Gastrocnemius medialis (tissue), 4 donors: ENCODE measurements at regions of chr18 and their contacts with region 1.

Region 1: GRCh38 chr18:73283788-73284187 is 416.0 kb upstream of the NETO1 start:
- DNase-seq: no peak
- ATAC-seq: no peak
- H3K4me3 ChIP-seq: no peak overlapping the region
- H3K27ac ChIP-seq: no peak overlapping the region
- H3K4me1 ChIP-seq: no peaks in the 10 kb centered on the region
- H3K27me3 ChIP-seq: no peaks in the 10 kb centered on the region
- CTCF ChIP-seq: no peak
- POLR2A ChIP-seq: no peak

Region 2: DNA sequence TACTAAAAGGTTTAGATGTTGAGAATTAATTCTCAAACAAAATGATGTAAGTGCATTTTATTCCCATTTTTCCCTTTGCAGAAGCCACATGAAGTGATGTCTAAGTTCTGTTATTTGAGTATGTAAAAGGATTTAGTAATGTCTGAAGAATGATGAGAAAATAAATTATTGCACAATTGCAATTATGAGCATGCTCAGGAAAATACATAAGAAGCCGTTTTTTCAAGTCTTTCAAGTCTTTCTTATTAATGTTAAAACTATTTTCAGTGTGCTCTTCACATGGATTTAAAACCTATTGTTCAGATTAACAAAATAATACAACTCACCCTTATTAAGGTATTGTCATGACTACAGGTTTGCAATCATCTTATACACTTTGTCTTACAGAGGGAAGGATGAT is 84.6 kb before region 1 on chr18:
- in situ Hi-C with region 1: loop called in 1 of 4 experiments (anchors 25 kb)
- intact Hi-C with region 1: no loop called
- DNase-seq: no peak
- ATAC-seq: no peak
- H3K4me3 ChIP-seq: no peak overlapping the region
- H3K27ac ChIP-seq: no peak overlapping the region
- H3K4me1 ChIP-seq: no peaks in the 10 kb centered on the region
- H3K27me3 ChIP-seq: no peaks in the 10 kb centered on the region
- CTCF ChIP-seq: no peak
- POLR2A ChIP-seq: no peak

Region 3: GRCh38 chr18:73980289-73980979 is 696.6 kb after region 1 on chr18:
- in situ Hi-C with region 1: no loop called
- intact Hi-C with region 1: no loop called
- DNase-seq: no peak
- ATAC-seq: no peak
- H3K4me3 ChIP-seq: no peak overlapping the region
- H3K27ac ChIP-seq: no peak overlapping the region
- H3K4me1 ChIP-seq: no peaks in the 10 kb centered on the region
- H3K27me3 ChIP-seq: no peaks in the 10 kb centered on the region
- CTCF ChIP-seq: no peak
- POLR2A ChIP-seq: no peak